Left ventricle myocardium inferior (tissue), 1 donor: ENCODE measurements at regions of chr1 and their contacts with region 1.

Region 1: GRCh38 chr1:117070124-117070523 is 10.0 kb downstream of the TTF2 start:
- DNase-seq: no peak
- H3K4me3 ChIP-seq: no peak overlapping the region
- H3K27ac ChIP-seq: no peak overlapping the region
- H3K4me1 ChIP-seq: no peaks in the 10 kb centered on the region
- H3K27me3 ChIP-seq: no peaks in the 10 kb centered on the region
- CTCF ChIP-seq: no peak

Region 2: GRCh38 chr1:116934586-116935207 is 135.4 kb before region 1 on chr1:
- intact Hi-C with region 1: no loop called
- DNase-seq: no peak
- H3K4me3 ChIP-seq: no peak overlapping the region
- H3K27ac ChIP-seq: no peak overlapping the region
- H3K4me1 ChIP-seq: peaks cover 31% of the 10 kb centered on the region
- H3K27me3 ChIP-seq: no peaks in the 10 kb centered on the region
- CTCF ChIP-seq: peak; percentile 31

Region 3: DNA sequence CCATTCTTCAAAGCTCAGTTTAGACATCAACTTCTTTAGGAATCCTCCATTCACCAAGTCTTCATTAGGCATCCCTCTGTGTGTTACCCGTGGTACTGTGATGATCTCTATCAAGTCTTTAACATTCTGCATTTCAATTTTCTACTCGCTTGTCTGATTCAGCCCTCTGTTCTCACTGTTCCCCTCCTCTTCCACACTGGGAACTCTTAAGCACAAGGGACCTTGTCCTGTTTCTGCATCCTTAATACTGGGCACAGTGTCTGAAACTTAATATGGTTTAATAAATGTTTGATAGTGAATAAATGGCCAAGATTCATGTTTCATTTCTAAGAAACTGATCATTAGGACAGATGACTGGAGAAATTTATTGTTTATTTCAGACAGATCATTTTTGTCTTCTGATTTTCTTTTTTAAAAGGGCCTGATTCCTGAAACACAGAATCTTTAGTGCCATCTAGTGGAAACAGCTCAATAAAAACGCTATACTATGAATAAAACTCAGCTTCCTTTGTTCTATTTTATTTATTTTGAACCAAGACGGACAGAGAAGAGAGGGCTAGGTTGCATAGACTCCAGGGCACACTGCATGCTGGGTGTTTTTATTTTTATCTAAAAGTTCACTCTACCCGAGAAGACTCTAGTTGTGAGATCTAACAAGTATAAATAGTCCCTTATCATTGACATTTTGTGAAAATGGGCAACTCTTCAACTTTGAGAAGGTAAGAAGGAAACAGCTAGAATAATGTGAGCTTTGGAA is 58.4 kb after region 1 on chr1:
- intact Hi-C with region 1: loop called (anchors 5 kb)
- DNase-seq: no peak
- H3K4me3 ChIP-seq: peak overlapping the region; percentile 50
- H3K27ac ChIP-seq: peak overlapping the region; percentile 74
- H3K4me1 ChIP-seq: peaks cover 15% of the 10 kb centered on the region
- H3K27me3 ChIP-seq: no peaks in the 10 kb centered on the region
- CTCF ChIP-seq: peak; percentile 61